Psoas muscle (tissue), 8 donors: ENCODE measurements at regions of chr18 and their contacts with region 1.

Region 1: GRCh38 chr18:26226229-26227005 is at the start of gene TAF4B:
- DNase-seq: peak; percentile 96 to 97
- ATAC-seq: peak; percentile 97 to 99 (median 98)
- H3K4me3 ChIP-seq: peak within 1 kb of the TSS; percentile 95
- H3K27ac ChIP-seq: peak within 1 kb of the TSS; percentile 93
- H3K4me1 ChIP-seq: peaks cover 14% of the 10 kb centered on the region
- H3K27me3 ChIP-seq: no peaks in the 10 kb centered on the region
- CTCF ChIP-seq: no peak
- total RNA-seq, gene TAF4B: 2.9 to 8.3 (median 5.6) TPM

Region 2: DNA sequence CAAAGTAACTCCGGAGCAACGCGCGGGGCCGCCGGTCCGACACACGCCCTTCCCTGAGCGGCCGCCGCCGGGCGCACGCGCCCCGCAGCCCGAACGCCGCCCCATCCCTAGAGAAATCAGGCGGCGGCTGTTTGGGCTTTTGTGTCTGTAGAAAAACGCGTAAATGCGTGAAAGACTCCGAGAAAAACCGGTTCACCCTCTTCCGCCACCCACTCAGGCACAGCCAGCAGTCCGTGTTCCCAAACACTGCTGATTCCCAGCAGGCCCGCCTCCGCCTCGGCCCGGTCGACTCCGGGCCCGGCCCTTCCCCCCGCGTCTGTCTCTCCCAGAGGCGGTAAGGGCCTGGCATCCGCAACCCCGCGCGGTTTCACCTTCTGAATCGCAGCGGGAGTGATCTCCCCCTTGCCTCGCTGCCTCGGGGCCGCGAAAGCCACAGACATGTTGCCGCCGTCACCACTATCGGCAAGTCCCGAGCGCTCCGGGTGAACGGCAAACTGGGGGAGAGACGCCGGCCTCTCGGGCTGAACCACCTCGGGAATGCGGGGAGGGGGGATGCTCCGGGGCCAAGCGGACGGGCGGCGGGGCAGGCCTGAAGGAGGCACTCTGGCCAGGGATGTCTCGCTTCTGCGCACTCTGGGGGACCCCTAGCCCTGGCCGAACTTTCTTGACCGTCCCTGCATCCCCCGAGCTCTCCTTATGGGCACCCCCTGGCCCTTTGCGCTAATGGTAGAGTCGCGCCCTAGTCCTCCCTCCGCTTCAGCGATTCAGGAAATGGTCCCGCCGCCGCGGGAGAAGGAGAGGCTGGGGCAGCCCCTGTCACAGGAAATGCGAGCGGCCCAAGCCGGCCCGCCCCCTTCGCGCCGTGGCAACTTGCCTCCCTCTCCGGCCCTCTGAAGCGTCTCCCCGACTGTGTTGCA is 136.0 kb before region 1 on chr18 and contains the start of gene SS18:
- intact Hi-C with region 1: loop called in 1 of 2 experiments (anchors 2 kb)
- DNase-seq: peak; percentile 95 to 97
- ATAC-seq: peak; percentile 94 to 97 (median 95)
- H3K4me3 ChIP-seq: peak within 1 kb of the TSS; percentile 94
- H3K27ac ChIP-seq: peak within 1 kb of the TSS; percentile 95
- H3K4me1 ChIP-seq: peaks cover 23% of the 10 kb centered on the region
- H3K27me3 ChIP-seq: no peaks in the 10 kb centered on the region
- CTCF ChIP-seq: peak; percentile 10
- total RNA-seq, gene SS18: 12.4 to 17.3 (median 13.1) TPM

Region 3: DNA sequence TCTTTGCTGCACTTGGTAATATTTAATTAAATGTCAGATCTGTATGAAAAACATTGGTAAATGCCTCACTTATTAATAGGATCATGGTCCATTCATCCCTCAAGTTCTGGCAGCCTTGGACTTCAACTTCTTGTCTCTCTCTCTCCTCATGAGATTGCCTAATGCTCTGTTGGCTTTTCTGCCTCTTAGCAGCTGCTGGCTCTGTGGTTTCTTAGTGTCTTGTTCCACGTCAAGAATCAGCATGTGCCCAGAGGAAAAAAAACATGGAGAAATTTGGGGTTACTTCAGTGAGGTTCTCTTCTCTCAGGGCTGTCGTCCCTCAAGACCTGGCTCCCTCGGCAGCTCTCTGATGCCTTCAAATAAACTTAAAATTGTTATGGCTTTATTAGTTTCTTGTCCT is 75.3 kb after region 1 on chr18:
- intact Hi-C with region 1: loop called in 1 of 2 experiments (anchors 5 kb)
- DNase-seq: no peak
- ATAC-seq: peak; percentile 48 to 74 (median 64)
- H3K4me3 ChIP-seq: no peak overlapping the region
- H3K27ac ChIP-seq: peak overlapping the region; percentile 39
- H3K4me1 ChIP-seq: peaks cover 10% of the 10 kb centered on the region
- H3K27me3 ChIP-seq: no peaks in the 10 kb centered on the region
- CTCF ChIP-seq: no peak

Region 4: DNA sequence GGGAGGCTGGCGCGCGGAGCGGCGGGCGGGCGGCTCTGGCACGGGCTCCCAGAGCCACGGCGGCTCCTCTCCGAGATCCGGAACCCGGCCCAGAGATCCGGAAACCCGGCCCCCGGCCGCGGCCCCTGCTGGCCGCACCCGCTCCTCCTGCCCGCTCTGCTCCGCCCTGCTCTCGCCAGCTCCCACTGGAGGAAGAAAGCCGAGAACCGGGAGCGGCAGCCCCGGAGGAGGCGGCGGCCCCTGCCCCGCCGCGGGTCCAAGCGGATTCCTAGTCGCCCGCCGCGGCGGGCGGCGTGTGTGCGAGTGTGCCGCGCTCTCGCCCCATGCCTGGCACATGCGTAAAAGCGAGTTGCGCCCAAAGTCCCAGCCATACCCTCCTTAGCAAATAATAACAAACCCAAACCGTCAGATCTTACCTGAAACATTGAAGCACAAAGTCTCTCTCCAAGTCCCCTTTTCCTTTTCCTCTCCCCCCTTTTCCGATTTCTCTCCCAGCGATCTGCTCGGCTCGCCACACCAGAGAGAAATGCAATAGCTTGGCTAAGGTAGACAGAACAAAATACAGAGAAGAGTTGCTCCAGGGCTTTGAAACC is 430.6 kb after region 1 on chr18:
- intact Hi-C with region 1: loop called in 1 of 2 experiments (anchors 10 kb)
- DNase-seq: peak; percentile 75 to 82
- ATAC-seq: peak; percentile 68 to 86 (median 80)
- H3K4me3 ChIP-seq: peak overlapping the region; percentile 76
- H3K27ac ChIP-seq: no peak overlapping the region
- H3K4me1 ChIP-seq: peaks cover 13% of the 10 kb centered on the region
- H3K27me3 ChIP-seq: peaks cover 0 to 80% (median 7%) of the 10 kb centered on the region in 3 donors
- CTCF ChIP-seq: peak; percentile 25